ENCODE measurements at regions of chr5 and their contacts with region 1.

Region 1: DNA sequence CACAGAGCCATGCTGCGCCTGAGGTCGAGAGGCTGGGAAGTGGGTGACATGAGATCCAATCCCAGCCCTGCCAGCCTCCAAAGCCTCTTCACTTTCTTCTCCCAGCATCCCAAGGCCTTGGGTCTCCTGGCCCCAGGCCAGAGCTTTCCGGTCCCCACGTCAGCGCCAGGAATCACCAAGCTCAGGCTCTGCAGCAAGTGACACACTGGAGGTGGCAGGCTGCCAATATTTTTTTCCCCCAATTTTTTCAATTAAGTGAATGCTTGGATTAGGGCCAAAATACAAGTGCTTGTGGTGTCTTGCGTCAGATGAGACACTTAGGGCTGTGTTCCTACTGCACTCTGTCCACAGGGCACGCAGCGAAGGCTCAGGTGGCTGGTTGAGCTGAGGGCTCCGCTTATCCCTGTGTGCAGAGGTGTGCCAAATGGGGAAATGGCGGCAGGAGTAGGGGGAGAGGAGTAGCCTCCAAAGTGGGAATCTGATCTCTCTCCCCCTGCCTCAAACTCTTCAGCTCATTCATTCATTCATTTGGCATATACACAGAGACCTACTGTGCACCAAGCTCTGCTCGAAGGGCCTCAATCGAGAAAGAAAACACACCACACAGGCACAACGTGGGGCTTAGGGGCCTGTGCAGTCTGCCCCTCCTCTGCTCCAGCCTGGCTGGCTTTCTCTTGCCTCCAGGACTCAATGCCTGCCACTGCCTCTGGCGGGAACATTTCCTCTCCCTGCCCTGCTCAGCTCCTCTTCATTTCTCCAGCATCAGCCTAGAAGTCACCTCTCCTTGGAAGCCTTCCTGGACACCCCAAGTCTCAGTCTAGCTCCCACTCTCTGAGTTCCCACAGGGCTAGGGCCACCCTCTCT is 16.6 kb downstream of the SH3PXD2B start:
- DNase-seq: peak; percentile 95
- H3K4me3 ChIP-seq: no peak overlapping the region
- H3K27ac ChIP-seq: peak overlapping the region; percentile 40
- H3K4me1 ChIP-seq: peaks cover 14% of the 10 kb centered on the region
- H3K27me3 ChIP-seq: no peaks in the 10 kb centered on the region
- CTCF ChIP-seq: no peak
- POLR2A ChIP-seq: no peak

Region 2: GRCh38 chr5:172353846-172354245 is 83.8 kb before region 1 on chr5:
- CTCF ChIA-PET with region 1: no interaction called
- POLR2A ChIA-PET with region 1: interaction called, 3 read pairs
- dilution Hi-C with region 1: no loop called
- intact Hi-C with region 1: loop called (anchors 2 kb)
- DNase-seq: no peak
- H3K4me3 ChIP-seq: no peak overlapping the region
- H3K27ac ChIP-seq: no peak overlapping the region
- H3K4me1 ChIP-seq: peaks cover 6% of the 10 kb centered on the region
- H3K27me3 ChIP-seq: no peaks in the 10 kb centered on the region
- CTCF ChIP-seq: no peak
- POLR2A ChIP-seq: no peak

Region 3: GRCh38 chr5:173989432-173990082 is 1551.9 kb after region 1 on chr5:
- CTCF ChIA-PET with region 1: no interaction called
- POLR2A ChIA-PET with region 1: no interaction called
- dilution Hi-C with region 1: no loop called
- intact Hi-C with region 1: no loop called
- DNase-seq: no peak
- H3K4me3 ChIP-seq: no peak overlapping the region
- H3K27ac ChIP-seq: no peak overlapping the region
- H3K4me1 ChIP-seq: no peaks in the 10 kb centered on the region
- H3K27me3 ChIP-seq: no peaks in the 10 kb centered on the region
- CTCF ChIP-seq: no peak
- POLR2A ChIP-seq: no peak